ENCODE measurements at regions of chr19 and their contacts with region 1.

Region 1: GRCh38 chr19:58326914-58327726 is at the start of gene ZSCAN22:
- DNase-seq: peak; percentile 97
- H3K4me3 ChIP-seq: peak within 1 kb of the TSS; percentile 56 to 100 (median 86)
- H3K27ac ChIP-seq: peak within 1 kb of the TSS; percentile 65
- H3K4me1 ChIP-seq: peaks cover 28% of the 10 kb centered on the region
- H3K27me3 ChIP-seq: no peaks in the 10 kb centered on the region
- CTCF ChIP-seq: no peak
- total RNA-seq, gene ZSCAN22: 3.2 to 3.7 TPM

Region 2: DNA sequence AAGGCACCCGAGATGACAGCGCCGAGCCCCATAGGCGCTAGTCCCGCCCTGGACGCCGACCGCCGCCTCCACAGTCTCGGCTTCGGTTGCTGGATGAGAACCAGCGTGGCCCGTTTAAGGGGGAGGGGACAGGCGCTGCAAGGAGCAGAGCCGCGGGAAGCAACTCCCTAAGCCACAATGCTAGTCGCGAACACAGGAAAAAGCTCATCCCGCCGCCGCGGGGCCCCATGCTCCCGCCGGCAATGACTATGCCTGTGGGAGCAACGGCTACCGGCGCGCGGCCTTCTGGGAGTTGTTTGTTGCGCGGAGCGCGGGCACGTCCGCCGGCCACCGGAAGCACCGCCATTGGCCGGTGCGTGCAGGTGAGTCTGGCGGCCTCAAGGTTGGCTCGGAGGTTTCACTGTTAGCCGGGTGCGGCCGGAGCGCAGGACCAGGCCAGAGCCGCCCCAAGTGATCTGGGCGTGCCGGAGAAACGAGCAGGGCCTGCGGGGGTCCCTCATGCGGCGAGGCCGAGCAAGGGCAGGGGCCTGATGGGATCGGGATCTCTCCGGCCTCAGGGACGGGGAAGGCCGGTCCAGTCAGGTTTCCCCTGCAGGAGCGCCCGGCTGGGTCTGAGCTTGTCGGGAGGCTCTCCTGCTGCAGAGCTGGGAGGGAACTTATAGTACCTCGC is 98.4 kb before region 1 on chr19 and contains the start of gene ZNF544:
- CTCF ChIA-PET with region 1: no interaction called
- dilution Hi-C with region 1: no loop called
- in situ Hi-C with region 1: no loop called
- intact Hi-C with region 1: loop called (anchors 5 kb)
- DNase-seq: peak; percentile 79
- H3K4me3 ChIP-seq: peak within 1 kb of the TSS; percentile 77 to 98 (median 85)
- H3K27ac ChIP-seq: peak within 1 kb of the TSS; percentile 50
- H3K4me1 ChIP-seq: peaks cover 16% of the 10 kb centered on the region
- H3K27me3 ChIP-seq: no peaks in the 10 kb centered on the region
- CTCF ChIP-seq: peak in 1 of 2 donors; percentile 14
- total RNA-seq, gene ZNF544: 32.3 to 48.3 TPM

Region 3: DNA sequence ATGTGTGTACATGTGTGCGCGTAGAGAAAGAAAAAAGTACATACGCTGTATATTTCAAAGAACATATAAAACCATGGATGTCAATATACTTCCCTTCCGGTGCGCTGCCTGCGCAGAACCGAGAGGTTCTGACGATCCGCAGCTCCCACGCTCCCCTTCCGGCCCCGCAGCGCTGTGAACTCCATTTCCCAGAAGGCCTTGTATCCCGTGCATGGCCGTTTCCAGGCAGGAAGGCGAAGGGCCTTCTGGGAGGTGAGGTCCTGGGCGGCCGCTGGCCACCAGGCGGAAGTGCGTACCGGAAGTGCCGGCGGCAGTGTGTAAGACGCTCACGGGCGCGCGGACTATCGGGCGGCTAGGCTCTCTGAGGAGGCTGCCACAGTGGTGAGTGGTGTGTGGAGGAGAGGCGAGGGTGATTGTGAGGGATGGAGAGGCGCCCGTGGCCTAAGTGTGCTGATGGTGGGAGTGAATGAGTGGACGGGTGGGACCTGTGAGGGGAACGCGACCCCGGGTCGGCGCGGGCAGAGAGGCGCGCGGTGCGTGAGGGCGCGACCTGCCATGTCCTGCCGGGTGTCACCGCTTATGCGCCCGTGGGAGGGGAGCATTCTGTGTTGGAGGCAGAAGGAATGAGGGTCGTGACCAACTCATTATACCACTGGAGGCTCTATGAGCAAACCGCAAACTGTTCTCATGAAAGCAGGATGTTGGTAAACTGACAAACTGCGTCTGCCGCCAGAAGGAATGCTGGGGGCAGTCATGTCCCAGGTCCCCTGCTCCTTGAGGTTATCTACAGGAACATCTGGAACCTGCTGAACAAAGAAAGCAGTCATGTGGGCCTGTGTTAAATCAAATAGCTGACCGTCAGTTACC is 21.8 kb before region 1 on chr19 and contains the start of gene ERVK3-1:
- CTCF ChIA-PET with region 1: no interaction called
- dilution Hi-C with region 1: no loop called
- in situ Hi-C with region 1: no loop called
- intact Hi-C with region 1: loop called (anchors 1 kb)
- DNase-seq: peak; percentile 94
- H3K4me3 ChIP-seq: peak within 1 kb of the TSS; percentile 76 to 94 (median 92)
- H3K27ac ChIP-seq: peak within 1 kb of the TSS; percentile 61
- H3K4me1 ChIP-seq: peaks cover 3% of the 10 kb centered on the region
- H3K27me3 ChIP-seq: no peaks in the 10 kb centered on the region
- CTCF ChIP-seq: peak in 1 of 2 donors; percentile 22
- total RNA-seq, gene ERVK3-1: 29.5 to 37.7 TPM

Region 4: GRCh38 chr19:58372311-58373133 is 45.4 kb after region 1 on chr19:
- CTCF ChIA-PET with region 1: no interaction called
- dilution Hi-C with region 1: loop called (anchors 5 kb)
- in situ Hi-C with region 1: no loop called
- intact Hi-C with region 1: no loop called
- DNase-seq: no peak
- H3K4me3 ChIP-seq: no peak overlapping the region
- H3K27ac ChIP-seq: no peak overlapping the region
- H3K4me1 ChIP-seq: no peaks in the 10 kb centered on the region
- H3K27me3 ChIP-seq: no peaks in the 10 kb centered on the region
- CTCF ChIP-seq: no peak

Region 5: GRCh38 chr19:58429745-58430144 is 102.6 kb after region 1 on chr19:
- CTCF ChIA-PET with region 1: no interaction called
- dilution Hi-C with region 1: loop called (anchors 5 kb)
- in situ Hi-C with region 1: no loop called
- intact Hi-C with region 1: no loop called
- DNase-seq: no peak
- H3K4me3 ChIP-seq: no peak overlapping the region
- H3K27ac ChIP-seq: no peak overlapping the region
- H3K4me1 ChIP-seq: peaks cover 17% of the 10 kb centered on the region
- H3K27me3 ChIP-seq: no peaks in the 10 kb centered on the region
- CTCF ChIP-seq: no peak

Measured in mammary epithelial cell (primary cell).